K562 (cell line): ENCODE measurements at regions of chr12 and their contacts with region 1.

Region 1: DNA sequence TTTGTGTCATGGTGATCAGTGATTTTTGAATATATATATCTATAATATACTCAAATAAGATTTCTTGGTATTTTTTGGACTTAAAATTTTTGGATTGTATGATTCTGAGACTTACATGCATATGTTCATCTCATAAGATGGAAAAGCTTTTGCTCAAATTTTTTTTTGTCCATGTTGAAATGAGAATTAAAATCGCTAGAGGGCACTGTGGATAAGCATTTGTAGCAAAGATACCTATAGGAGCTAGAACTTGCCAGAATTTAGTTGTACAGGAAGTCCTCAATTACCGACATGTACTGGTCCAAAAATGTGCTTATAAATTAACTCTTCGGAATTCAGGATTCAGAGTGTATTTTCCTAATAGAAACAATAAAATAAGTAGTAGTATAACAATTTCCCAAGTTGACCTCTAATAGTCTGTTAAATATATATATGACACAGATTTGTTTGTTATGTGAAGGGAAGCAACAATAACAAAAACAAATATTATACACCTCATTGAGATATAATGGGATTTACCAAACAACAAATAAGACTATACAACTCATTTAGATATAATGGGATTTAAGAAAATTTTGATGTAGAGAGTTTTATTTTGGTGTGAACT is 179.6 kb downstream of the TMEM117 start:
- DNase-seq: peak; percentile 17 to 44 (median 25)
- ATAC-seq: peak; percentile 69
- H3K4me3 ChIP-seq: no peak overlapping the region
- H3K27ac ChIP-seq: no peak overlapping the region
- H3K4me1 ChIP-seq: no peaks in the 10 kb centered on the region
- H3K27me3 ChIP-seq: no peaks in the 10 kb centered on the region
- CTCF ChIP-seq: peak; percentile 21 to 58 (median 38); a peak in 4 of 6 replicates
- EP300 ChIP-seq: no peak
- POLR2A ChIP-seq: no peak
- RAD21 ChIP-seq: peak; percentile 66 to 69

Region 2: GRCh38 chr12:44947163-44947562 is 931.7 kb after region 1 on chr12:
- CTCF ChIA-PET with region 1: interaction called, 3 read pairs
- POLR2A ChIA-PET with region 1: no interaction called
- in situ Hi-C with region 1: loop called (anchors 25 kb)
- intact Hi-C with region 1: loop called (anchors 5 kb)
- DNase-seq: no peak
- ATAC-seq: no peak
- H3K4me3 ChIP-seq: no peak overlapping the region
- H3K27ac ChIP-seq: no peak overlapping the region
- H3K4me1 ChIP-seq: no peaks in the 10 kb centered on the region
- H3K27me3 ChIP-seq: no peaks in the 10 kb centered on the region
- CTCF ChIP-seq: no peak
- EP300 ChIP-seq: no peak
- POLR2A ChIP-seq: no peak
- RAD21 ChIP-seq: no peak